ENCODE measurements at regions of chr1 and their contacts with region 1.

Region 1: GRCh38 chr1:116033322-116033721 is 57.0 kb downstream of the SLC22A15 start:
- DNase-seq: no peak
- H3K4me3 ChIP-seq: no peak overlapping the region
- H3K4me3 Mint-ChIP-seq: no peak overlapping the region
- H3K27ac ChIP-seq: no peak overlapping the region
- H3K27ac Mint-ChIP-seq: no peak overlapping the region
- H3K4me1 ChIP-seq: no peaks in the 10 kb centered on the region
- H3K4me1 Mint-ChIP-seq: no peaks in the 10 kb centered on the region
- H3K27me3 ChIP-seq: no peaks in the 10 kb centered on the region
- H3K27me3 Mint-ChIP-seq: peaks cover 0 to 1% of the 10 kb centered on the region in 2 donors

Region 2: GRCh38 chr1:116020668-116021275 is 12.6 kb before region 1 on chr1:
- CTCF ChIA-PET with region 1: interaction called, 15 read pairs
- POLR2A ChIA-PET with region 1: no interaction called
- intact Hi-C with region 1: no loop called
- DNase-seq: peak in 4 of 5 donors; percentile 11 to 34 (median 25)
- H3K4me3 ChIP-seq: no peak overlapping the region
- H3K4me3 Mint-ChIP-seq: no peak overlapping the region
- H3K27ac ChIP-seq: no peak overlapping the region
- H3K27ac Mint-ChIP-seq: no peak overlapping the region
- H3K4me1 ChIP-seq: no peaks in the 10 kb centered on the region
- H3K4me1 Mint-ChIP-seq: peaks cover 0 to 3% (median 2%) of the 10 kb centered on the region in 4 donors
- H3K27me3 ChIP-seq: no peaks in the 10 kb centered on the region
- H3K27me3 Mint-ChIP-seq: peaks cover 0 to 3% of the 10 kb centered on the region in 2 donors

Region 3: GRCh38 chr1:116067566-116067890 is 34.2 kb after region 1 on chr1:
- CTCF ChIA-PET with region 1: no interaction called
- POLR2A ChIA-PET with region 1: no interaction called
- intact Hi-C with region 1: no loop called
- DNase-seq: no peak
- H3K4me3 ChIP-seq: no peak overlapping the region
- H3K4me3 Mint-ChIP-seq: no peak overlapping the region
- H3K27ac ChIP-seq: no peak overlapping the region
- H3K27ac Mint-ChIP-seq: no peak overlapping the region
- H3K4me1 ChIP-seq: no peaks in the 10 kb centered on the region
- H3K4me1 Mint-ChIP-seq: no peaks in the 10 kb centered on the region
- H3K27me3 ChIP-seq: no peaks in the 10 kb centered on the region
- H3K27me3 Mint-ChIP-seq: peaks cover 2 to 4% of the 10 kb centered on the region in 2 donors

Measured in CD4-positive, alpha-beta memory T cell (primary cell).